Gastrocnemius medialis (tissue), 4 donors: ENCODE measurements at regions of chr1 and their contacts with region 1.

Region 1: GRCh38 chr1:3530926-3531818 is 76.7 kb downstream of the ARHGEF16 start:
- DNase-seq: peak; percentile 60 to 70
- ATAC-seq: peak; percentile 61 to 68
- H3K4me3 ChIP-seq: peak overlapping the region; percentile 60 to 78 (median 69)
- H3K27ac ChIP-seq: peak overlapping the region; percentile 70 to 90 (median 82)
- H3K4me1 ChIP-seq: peaks cover 20 to 34% of the 10 kb centered on the region in 2 donors
- H3K27me3 ChIP-seq: no peaks in the 10 kb centered on the region
- CTCF ChIP-seq: no peak
- POLR2A ChIP-seq: peak; percentile 96 to 97

Region 2: DNA sequence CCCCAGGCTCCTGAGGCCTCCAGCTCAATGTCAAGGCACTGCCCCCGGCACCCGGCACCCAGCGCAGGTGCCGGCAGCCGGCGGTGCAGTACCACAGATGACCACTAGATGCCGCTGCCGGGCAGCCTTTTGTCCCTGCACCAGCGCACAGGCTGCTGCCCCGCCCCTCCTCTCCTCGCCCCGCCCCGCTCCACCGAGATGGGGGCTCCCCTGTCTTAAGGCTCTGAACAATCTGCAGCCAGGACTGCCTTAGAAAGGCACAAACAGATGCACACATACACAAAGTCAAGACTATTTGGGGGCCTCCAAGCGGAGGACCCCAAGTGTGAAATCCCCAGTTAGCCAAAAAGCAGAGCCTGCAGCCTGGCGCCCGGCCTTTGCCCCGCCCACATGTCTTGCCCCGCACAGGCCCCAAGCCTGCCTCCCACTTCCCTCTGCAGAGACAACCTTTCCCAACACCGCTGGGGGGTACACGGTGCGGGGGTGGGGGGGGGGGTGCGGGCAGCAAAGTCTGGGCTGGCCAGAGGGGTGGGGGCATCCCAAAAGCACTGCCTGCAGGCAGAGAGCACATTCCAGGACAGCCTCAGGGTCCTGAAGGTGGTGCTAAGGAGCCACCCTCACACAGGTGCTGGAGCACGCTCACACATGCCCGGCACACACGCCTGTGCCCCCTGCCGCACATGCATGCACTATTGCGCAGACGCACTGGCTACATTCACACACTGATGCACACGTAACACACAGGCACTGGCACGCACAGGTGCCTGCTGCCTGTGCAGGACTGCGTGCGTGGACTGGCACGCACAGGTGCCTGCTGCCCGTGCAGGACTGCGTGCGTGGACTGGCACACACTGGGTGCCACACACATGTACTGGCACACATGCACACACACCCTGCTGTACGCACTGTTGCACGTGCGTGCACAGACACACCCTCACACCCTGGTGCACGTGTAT is 39.6 kb before region 1 on chr1:
- in situ Hi-C with region 1: no loop called
- intact Hi-C with region 1: loop called (anchors 2 kb)
- DNase-seq: peak; percentile 56 to 57
- ATAC-seq: peak; percentile 61 to 86
- H3K4me3 ChIP-seq: no peak overlapping the region
- H3K27ac ChIP-seq: no peak overlapping the region
- H3K4me1 ChIP-seq: peaks cover 0 to 2% of the 10 kb centered on the region in 2 donors
- H3K27me3 ChIP-seq: no peaks in the 10 kb centered on the region
- CTCF ChIP-seq: peak; percentile 85 to 100 (median 99)
- POLR2A ChIP-seq: no peak